Caco-2 (cell line): ENCODE measurements at regions of chr5 and their contacts with region 1.

Region 1: GRCh38 chr5:77784735-77785134 is 8.6 kb upstream of the TBCA start:
- DNase-seq: no peak
- H3K4me3 ChIP-seq: no peak overlapping the region
- H3K4me3 Mint-ChIP-seq: no peak overlapping the region
- H3K27ac Mint-ChIP-seq: no peak overlapping the region
- H3K4me1 ChIP-seq: no peaks in the 10 kb centered on the region
- H3K4me1 Mint-ChIP-seq: no peaks in the 10 kb centered on the region
- H3K27me3 ChIP-seq: no peaks in the 10 kb centered on the region
- H3K27me3 Mint-ChIP-seq: no peaks in the 10 kb centered on the region
- CTCF ChIP-seq: no peak

Region 2: DNA sequence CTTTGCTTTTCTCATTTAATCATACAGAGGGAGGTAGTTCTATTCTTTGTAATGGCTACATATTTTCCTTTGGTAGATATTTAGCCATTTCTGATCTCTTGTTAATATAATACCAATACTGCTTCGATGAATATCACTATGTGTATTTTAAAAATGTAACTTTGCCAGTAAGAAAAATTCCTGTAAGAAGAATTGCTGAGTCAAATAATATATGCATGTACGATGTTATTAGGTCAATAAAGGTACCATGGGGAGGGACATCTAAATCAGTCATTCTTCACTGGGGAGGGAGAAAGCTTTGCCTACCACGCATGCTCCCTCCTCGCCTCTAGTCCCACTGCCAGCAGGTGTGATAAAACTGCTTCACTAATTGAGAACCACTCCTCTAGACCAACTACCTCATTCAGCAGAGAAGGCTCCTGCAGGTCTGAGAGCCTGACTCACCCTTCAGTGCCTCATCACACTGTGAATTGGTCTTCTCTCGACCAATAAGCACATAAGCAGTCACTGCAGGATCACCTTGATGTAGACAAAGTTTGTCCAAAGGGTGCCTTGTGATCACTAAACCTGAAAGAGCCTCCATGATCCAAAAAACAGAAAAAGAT is 47.5 kb after region 1 on chr5:
- CTCF ChIA-PET with region 1: no interaction called
- POLR2A ChIA-PET with region 1: no interaction called
- intact Hi-C with region 1: loop called (anchors 5 kb)
- DNase-seq: no peak
- H3K4me3 ChIP-seq: no peak overlapping the region
- H3K4me3 Mint-ChIP-seq: no peak overlapping the region
- H3K27ac Mint-ChIP-seq: no peak overlapping the region
- H3K4me1 ChIP-seq: no peaks in the 10 kb centered on the region
- H3K4me1 Mint-ChIP-seq: no peaks in the 10 kb centered on the region
- H3K27me3 ChIP-seq: no peaks in the 10 kb centered on the region
- H3K27me3 Mint-ChIP-seq: peaks cover 13% of the 10 kb centered on the region
- CTCF ChIP-seq: no peak